MCF 10A (cell line): ENCODE measurements at regions of chr1 and their contacts with region 1.

Region 1: GRCh38 chr1:223133824-223134435 is 9.1 kb downstream of the TLR5 start:
- DNase-seq: peak; percentile 94
- H3K4me3 Mint-ChIP-seq: peak overlapping the region; percentile 63
- H3K27ac Mint-ChIP-seq: no peak overlapping the region
- H3K4me1 Mint-ChIP-seq: peaks cover 45% of the 10 kb centered on the region
- H3K27me3 Mint-ChIP-seq: peaks cover 9% of the 10 kb centered on the region
- CTCF ChIP-seq: no peak

Region 2: GRCh38 chr1:223102797-223103533 is 31.0 kb before region 1 on chr1:
- CTCF ChIA-PET with region 1: interaction called, 49 read pairs
- POLR2A ChIA-PET with region 1: no interaction called
- intact Hi-C with region 1: no loop called
- DNase-seq: no peak
- H3K4me3 Mint-ChIP-seq: no peak overlapping the region
- H3K27ac Mint-ChIP-seq: no peak overlapping the region
- H3K4me1 Mint-ChIP-seq: no peaks in the 10 kb centered on the region
- H3K27me3 Mint-ChIP-seq: no peaks in the 10 kb centered on the region
- CTCF ChIP-seq: no peak

Region 3: GRCh38 chr1:223175032-223175431 is 41.1 kb after region 1 on chr1:
- CTCF ChIA-PET with region 1: interaction called, 33 read pairs
- POLR2A ChIA-PET with region 1: interaction called, 12 read pairs
- intact Hi-C with region 1: loop called (anchors 2 kb)
- DNase-seq: peak; percentile 80
- H3K4me3 Mint-ChIP-seq: no peak overlapping the region
- H3K27ac Mint-ChIP-seq: no peak overlapping the region
- H3K4me1 Mint-ChIP-seq: peaks cover 10% of the 10 kb centered on the region
- H3K27me3 Mint-ChIP-seq: no peaks in the 10 kb centered on the region
- CTCF ChIP-seq: peak; percentile 71

Region 4: GRCh38 chr1:223258741-223259198 is 124.8 kb after region 1 on chr1:
- CTCF ChIA-PET with region 1: interaction called, 55 read pairs
- POLR2A ChIA-PET with region 1: interaction called, 4 read pairs
- intact Hi-C with region 1: no loop called
- DNase-seq: peak; percentile 98
- H3K4me3 Mint-ChIP-seq: no peak overlapping the region
- H3K27ac Mint-ChIP-seq: no peak overlapping the region
- H3K4me1 Mint-ChIP-seq: peaks cover 32% of the 10 kb centered on the region
- H3K27me3 Mint-ChIP-seq: no peaks in the 10 kb centered on the region
- CTCF ChIP-seq: no peak

Region 5: GRCh38 chr1:223363856-223364684 is 230.1 kb after region 1 on chr1 and contains the start of gene SUSD4:
- CTCF ChIA-PET with region 1: interaction called, 171 read pairs
- POLR2A ChIA-PET with region 1: interaction called, 17 read pairs
- intact Hi-C with region 1: no loop called
- DNase-seq: no peak
- H3K4me3 Mint-ChIP-seq: peak within 1 kb of the TSS; percentile 69
- H3K27ac Mint-ChIP-seq: no peak within 1 kb of the TSS
- H3K4me1 Mint-ChIP-seq: no peaks in the 10 kb centered on the region
- H3K27me3 Mint-ChIP-seq: peaks cover 77% of the 10 kb centered on the region
- CTCF ChIP-seq: no peak
- total RNA-seq, gene SUSD4: 0.42 and 2.3 TPM in 2 replicates

Region 6: GRCh38 chr1:223611936-223612335 is 478.0 kb after region 1 on chr1:
- CTCF ChIA-PET with region 1: interaction called, 10 read pairs
- POLR2A ChIA-PET with region 1: no interaction called
- intact Hi-C with region 1: no loop called
- DNase-seq: no peak
- H3K4me3 Mint-ChIP-seq: no peak overlapping the region
- H3K27ac Mint-ChIP-seq: no peak overlapping the region
- H3K4me1 Mint-ChIP-seq: no peaks in the 10 kb centered on the region
- H3K27me3 Mint-ChIP-seq: no peaks in the 10 kb centered on the region
- CTCF ChIP-seq: no peak